Heart left ventricle (tissue), 16 donors: ENCODE measurements at regions of chr2 and their contacts with region 1.

Region 1: DNA sequence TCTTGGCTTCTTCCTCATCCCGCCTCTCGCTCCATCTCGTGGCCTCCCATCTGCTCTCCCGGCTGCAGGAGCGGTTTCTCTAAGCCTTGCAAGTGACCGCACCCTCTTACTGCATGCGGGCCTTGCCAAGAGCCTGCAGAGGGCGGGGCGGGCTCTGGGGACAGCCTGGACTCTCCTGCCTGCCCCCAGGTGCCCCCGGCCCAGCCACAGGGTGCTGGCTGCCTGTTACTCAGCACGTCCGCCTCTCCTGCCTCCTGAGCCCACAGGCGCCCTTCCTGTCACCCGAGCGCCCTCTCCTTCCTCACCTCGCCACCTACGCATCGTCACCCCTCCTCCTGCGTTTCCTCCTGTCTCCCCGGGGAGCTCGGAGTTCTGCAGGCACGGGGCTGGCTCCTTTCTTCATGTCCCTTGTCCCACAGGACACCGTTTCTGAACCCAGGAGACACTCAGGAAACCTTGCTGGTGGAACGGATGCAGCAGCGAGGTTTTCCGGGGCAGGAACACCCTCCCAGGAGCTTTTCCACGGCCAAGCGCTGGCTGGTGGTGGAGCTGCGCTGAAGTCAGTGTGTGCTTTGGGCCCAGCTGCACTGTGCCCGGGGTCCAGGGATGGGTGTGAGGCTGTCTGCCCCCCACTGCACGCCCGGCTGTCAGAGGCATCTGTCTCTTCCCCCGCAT is 28.5 kb downstream of the HPCAL1 start:
- DNase-seq: peak; percentile 56 to 84 (median 78)
- ATAC-seq: peak; percentile 53 to 77 (median 74)
- H3K4me3 ChIP-seq: peak overlapping the region in 9 of 12 donors; percentile 11 to 50 (median 35)
- H3K27ac ChIP-seq: peak overlapping the region in 11 of 12 donors; percentile 17 to 79 (median 57)
- H3K4me1 ChIP-seq: peaks cover 6 to 72% (median 43%) of the 10 kb centered on the region in 12 donors
- H3K27me3 ChIP-seq: no peaks in the 10 kb centered on the region
- CTCF ChIP-seq: peak in 1 of 12 donors; percentile 15
- POLR2A ChIP-seq: no peak

Region 2: GRCh38 chr2:10400978-10401951 is 70.1 kb after region 1 on chr2:
- intact Hi-C with region 1: loop called in 4 of 10 experiments (anchors 1 to 10 kb)
- DNase-seq: peak in 1 of 5 donors; percentile 57
- ATAC-seq: peak; percentile 3 to 43 (median 16)
- H3K4me3 ChIP-seq: peak overlapping the region in 2 of 12 donors; percentile 2 to 6
- H3K27ac ChIP-seq: peak overlapping the region; percentile 55 to 90 (median 72)
- H3K4me1 ChIP-seq: peaks cover 8 to 74% (median 64%) of the 10 kb centered on the region in 12 donors
- H3K27me3 ChIP-seq: no peaks in the 10 kb centered on the region
- CTCF ChIP-seq: no peak
- POLR2A ChIP-seq: no peak

Region 3: GRCh38 chr2:10566018-10566417 is 234.9 kb after region 1 on chr2:
- intact Hi-C with region 1: no loop called
- DNase-seq: no peak
- ATAC-seq: no peak
- H3K4me3 ChIP-seq: no peak overlapping the region
- H3K27ac ChIP-seq: no peak overlapping the region
- H3K4me1 ChIP-seq: peaks cover 0 to 9% (median 0%) of the 10 kb centered on the region in 12 donors
- H3K27me3 ChIP-seq: no peaks in the 10 kb centered on the region
- CTCF ChIP-seq: no peak
- POLR2A ChIP-seq: no peak